ENCODE measurements at regions of chr1 and their contacts with region 1.

Region 1: GRCh38 chr1:206734499-206735142 is 36.0 kb upstream of the IL19 start:
- DNase-seq: peak; percentile 89
- ATAC-seq: peak; percentile 52
- H3K4me3 Mint-ChIP-seq: no peak overlapping the region
- H3K27ac Mint-ChIP-seq: no peak overlapping the region
- H3K4me1 Mint-ChIP-seq: peaks cover 55% of the 10 kb centered on the region
- H3K27me3 Mint-ChIP-seq: no peaks in the 10 kb centered on the region

Region 2: GRCh38 chr1:206716870-206717673 is 17.5 kb before region 1 on chr1:
- CTCF ChIA-PET with region 1: interaction called, 13 read pairs
- POLR2A ChIA-PET with region 1: no interaction called
- intact Hi-C with region 1: no loop called
- DNase-seq: peak; percentile 45
- ATAC-seq: peak; percentile 71
- H3K4me3 Mint-ChIP-seq: no peak overlapping the region
- H3K27ac Mint-ChIP-seq: peak overlapping the region; percentile 89
- H3K4me1 Mint-ChIP-seq: peaks cover 77% of the 10 kb centered on the region
- H3K27me3 Mint-ChIP-seq: no peaks in the 10 kb centered on the region

Region 3: GRCh38 chr1:206766251-206766856 is 31.7 kb after region 1 on chr1:
- CTCF ChIA-PET with region 1: interaction called, 21 read pairs
- POLR2A ChIA-PET with region 1: interaction called, 3 read pairs
- intact Hi-C with region 1: loop called (anchors 2 kb)
- DNase-seq: peak; percentile 82
- ATAC-seq: peak; percentile 64
- H3K4me3 Mint-ChIP-seq: peak overlapping the region; percentile 29
- H3K27ac Mint-ChIP-seq: peak overlapping the region; percentile 44
- H3K4me1 Mint-ChIP-seq: peaks cover 63% of the 10 kb centered on the region
- H3K27me3 Mint-ChIP-seq: peaks cover 10% of the 10 kb centered on the region

Region 4: GRCh38 chr1:206803221-206803730 is 68.7 kb after region 1 on chr1:
- CTCF ChIA-PET with region 1: interaction called, 198 read pairs
- POLR2A ChIA-PET with region 1: interaction called, 7 read pairs
- intact Hi-C with region 1: loop called (anchors 1 kb)
- DNase-seq: peak; percentile 87
- ATAC-seq: peak; percentile 91
- H3K4me3 Mint-ChIP-seq: peak overlapping the region; percentile 0
- H3K27ac Mint-ChIP-seq: peak overlapping the region; percentile 77
- H3K4me1 Mint-ChIP-seq: peaks cover 67% of the 10 kb centered on the region
- H3K27me3 Mint-ChIP-seq: peaks cover 21% of the 10 kb centered on the region

Region 5: GRCh38 chr1:206905280-206906164 is 170.9 kb after region 1 on chr1:
- CTCF ChIA-PET with region 1: interaction called, 24 read pairs
- POLR2A ChIA-PET with region 1: no interaction called
- intact Hi-C with region 1: no loop called
- DNase-seq: peak; percentile 76
- ATAC-seq: peak; percentile 93
- H3K4me3 Mint-ChIP-seq: peak overlapping the region; percentile 27
- H3K27ac Mint-ChIP-seq: peak overlapping the region; percentile 87
- H3K4me1 Mint-ChIP-seq: peaks cover 86% of the 10 kb centered on the region
- H3K27me3 Mint-ChIP-seq: no peaks in the 10 kb centered on the region

Region 6: DNA sequence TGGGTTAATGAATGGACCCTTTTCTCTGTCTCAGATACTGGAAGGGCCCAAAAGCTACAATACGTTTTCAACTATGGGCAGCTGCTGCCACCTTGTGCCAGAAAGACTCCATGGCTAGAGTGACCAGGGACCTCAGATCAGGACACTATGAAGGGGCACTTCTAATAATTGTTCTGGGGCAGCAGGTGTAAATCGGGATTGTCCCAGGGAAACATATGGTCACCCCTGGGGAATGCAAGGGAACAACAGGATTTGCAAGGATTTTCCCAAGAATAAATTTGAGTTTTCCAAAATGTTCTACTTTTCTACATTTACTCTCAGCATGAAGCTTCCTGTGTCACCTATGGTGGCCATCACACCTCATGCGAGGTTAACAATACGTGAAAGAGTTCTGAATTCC is 247.6 kb after region 1 on chr1:
- CTCF ChIA-PET with region 1: interaction called, 12 read pairs
- POLR2A ChIA-PET with region 1: no interaction called
- intact Hi-C with region 1: loop called (anchors 2 to 5 kb)
- DNase-seq: peak; percentile 74
- ATAC-seq: peak; percentile 81
- H3K4me3 Mint-ChIP-seq: no peak overlapping the region
- H3K27ac Mint-ChIP-seq: no peak overlapping the region
- H3K4me1 Mint-ChIP-seq: peaks cover 3% of the 10 kb centered on the region
- H3K27me3 Mint-ChIP-seq: peaks cover 2% of the 10 kb centered on the region

Region 7: DNA sequence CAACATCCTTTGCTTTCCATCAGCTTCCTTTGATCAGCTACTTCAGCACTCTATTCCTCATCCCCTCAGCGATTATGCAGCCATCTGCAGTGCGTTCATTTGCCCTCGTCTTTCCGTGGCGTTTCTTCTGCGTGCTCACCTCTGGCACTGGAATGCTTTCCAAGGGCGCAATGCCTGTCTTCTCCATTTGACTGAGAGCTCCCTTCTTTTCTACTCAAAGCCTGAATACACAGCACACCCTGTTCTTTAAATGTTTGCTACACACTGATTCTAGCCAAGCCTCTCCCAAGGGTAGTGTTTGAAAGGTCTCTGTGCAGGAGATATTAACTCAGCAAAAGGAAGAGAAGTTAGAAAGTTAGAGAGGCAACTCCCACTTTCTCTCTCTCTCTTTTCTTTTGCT is 275.3 kb after region 1 on chr1:
- CTCF ChIA-PET with region 1: no interaction called
- POLR2A ChIA-PET with region 1: no interaction called
- intact Hi-C with region 1: no loop called
- DNase-seq: no peak
- ATAC-seq: no peak
- H3K4me3 Mint-ChIP-seq: no peak overlapping the region
- H3K27ac Mint-ChIP-seq: no peak overlapping the region
- H3K4me1 Mint-ChIP-seq: no peaks in the 10 kb centered on the region
- H3K27me3 Mint-ChIP-seq: peaks cover 14% of the 10 kb centered on the region

Region 8: GRCh38 chr1:207077470-207078377 is 343.1 kb after region 1 on chr1:
- CTCF ChIA-PET with region 1: no interaction called
- POLR2A ChIA-PET with region 1: no interaction called
- intact Hi-C with region 1: no loop called
- DNase-seq: peak; percentile 76
- ATAC-seq: peak; percentile 92
- H3K4me3 Mint-ChIP-seq: no peak overlapping the region
- H3K27ac Mint-ChIP-seq: no peak overlapping the region
- H3K4me1 Mint-ChIP-seq: no peaks in the 10 kb centered on the region
- H3K27me3 Mint-ChIP-seq: peaks cover 8% of the 10 kb centered on the region